ENCODE measurements at regions of chr10 and their contacts with region 1.

Region 1: GRCh38 chr10:6050801-6051445 is 11.2 kb downstream of the IL2RA start:
- DNase-seq: peak; percentile 97
- ATAC-seq: peak; percentile 67
- H3K4me3 Mint-ChIP-seq: peak overlapping the region; percentile 76
- H3K27ac Mint-ChIP-seq: peak overlapping the region; percentile 88
- H3K4me1 Mint-ChIP-seq: peaks cover 86% of the 10 kb centered on the region
- H3K27me3 Mint-ChIP-seq: no peaks in the 10 kb centered on the region

Region 2: DNA sequence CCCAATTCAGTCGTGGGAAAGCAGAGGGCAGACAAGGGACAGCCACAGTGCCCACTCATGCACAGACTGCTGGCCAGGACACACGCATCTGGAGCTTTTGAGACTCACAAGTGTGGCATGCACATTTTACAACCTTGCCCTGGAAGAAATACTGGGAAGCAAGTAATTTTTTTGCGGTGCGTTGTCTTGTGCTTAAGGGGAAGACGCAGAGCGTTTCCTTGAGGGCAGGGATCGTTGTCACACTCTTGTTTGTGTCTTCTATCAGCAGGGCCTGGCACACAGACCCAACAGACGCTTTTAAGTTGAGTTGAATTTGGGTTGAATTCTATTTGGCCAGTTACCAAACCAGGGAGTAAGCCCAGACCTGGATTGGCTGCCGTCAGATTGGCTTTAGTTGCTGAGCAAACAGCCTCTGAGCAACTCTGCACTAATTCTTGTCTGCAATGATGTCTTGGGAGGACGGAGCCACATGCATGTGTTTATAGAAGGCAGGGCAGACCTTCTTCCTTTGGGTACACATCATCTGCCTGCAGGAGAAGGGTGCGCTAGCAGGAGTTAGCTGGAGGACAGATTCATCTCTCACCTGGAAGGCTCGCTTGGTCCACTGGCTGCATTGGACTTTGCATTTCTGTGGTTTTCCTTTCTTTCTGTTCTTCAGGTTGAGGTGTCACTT is 27.1 kb before region 1 on chr10:
- CTCF ChIA-PET with region 1: no interaction called
- DNase-seq: peak; percentile 27
- ATAC-seq: no peak
- H3K4me3 Mint-ChIP-seq: no peak overlapping the region
- H3K27ac Mint-ChIP-seq: peak overlapping the region; percentile 21
- H3K4me1 Mint-ChIP-seq: peaks cover 59% of the 10 kb centered on the region
- H3K27me3 Mint-ChIP-seq: no peaks in the 10 kb centered on the region

Region 3: GRCh38 chr10:6062101-6062771 is 11.3 kb after region 1 on chr10 and contains the start of gene IL2RA:
- CTCF ChIA-PET with region 1: interaction called, 26 read pairs
- DNase-seq: peak; percentile 84
- ATAC-seq: peak; percentile 71
- H3K4me3 Mint-ChIP-seq: peak within 1 kb of the TSS; percentile 88
- H3K27ac Mint-ChIP-seq: peak within 1 kb of the TSS; percentile 88
- H3K4me1 Mint-ChIP-seq: peaks cover 68% of the 10 kb centered on the region
- H3K27me3 Mint-ChIP-seq: no peaks in the 10 kb centered on the region
- total RNA-seq, gene IL2RA: 302 to 832 TPM

Region 4: DNA sequence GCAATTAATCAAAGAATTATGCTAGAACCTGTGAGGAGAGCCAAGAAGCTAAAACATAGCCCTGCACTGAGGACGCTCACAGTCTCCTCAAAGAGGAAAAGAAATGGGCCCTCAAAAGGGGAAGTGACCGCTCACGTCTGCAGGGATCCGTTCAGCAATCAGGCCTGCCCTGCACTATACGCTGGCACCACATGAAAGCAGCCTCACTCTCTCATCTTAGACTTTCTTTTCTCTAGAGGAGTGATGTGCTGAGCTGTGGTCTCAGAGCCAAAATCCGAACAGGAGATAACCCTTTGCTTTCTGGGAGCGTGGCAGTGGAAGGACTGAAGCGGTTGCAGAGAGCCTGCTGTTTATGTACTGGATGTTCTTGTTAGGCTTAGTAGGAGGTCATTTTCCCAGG is 17.5 kb after region 1 on chr10:
- CTCF ChIA-PET with region 1: interaction called, 26 read pairs
- DNase-seq: no peak
- ATAC-seq: peak; percentile 5
- H3K4me3 Mint-ChIP-seq: peak overlapping the region; percentile 32
- H3K27ac Mint-ChIP-seq: peak overlapping the region; percentile 96
- H3K4me1 Mint-ChIP-seq: peaks cover 94% of the 10 kb centered on the region
- H3K27me3 Mint-ChIP-seq: no peaks in the 10 kb centered on the region

Region 5: GRCh38 chr10:6083523-6084475 is 32.9 kb after region 1 on chr10:
- CTCF ChIA-PET with region 1: interaction called, 51 read pairs
- DNase-seq: peak; percentile 89
- ATAC-seq: peak; percentile 68
- H3K4me3 Mint-ChIP-seq: peak overlapping the region; percentile 74
- H3K27ac Mint-ChIP-seq: peak overlapping the region; percentile 90
- H3K4me1 Mint-ChIP-seq: peaks cover 79% of the 10 kb centered on the region
- H3K27me3 Mint-ChIP-seq: no peaks in the 10 kb centered on the region